Activated CD4-positive, alpha-beta T cell treated with anti-CD3 and anti-CD28 coated beads, Interleukin-2, amount 10 ng/mL, durations not matched to agents 24 days and 14 days (primary cell): ENCODE measurements at regions of chr1 and their contacts with region 1.

Region 1: GRCh38 chr1:169138866-169139670 is 32.6 kb downstream of the ATP1B1 start:
- DNase-seq: no peak
- H3K4me3 Mint-ChIP-seq: peak overlapping the region; percentile 8
- H3K27ac Mint-ChIP-seq: peak overlapping the region; percentile 81
- H3K4me1 Mint-ChIP-seq: peaks cover 15% of the 10 kb centered on the region
- H3K27me3 Mint-ChIP-seq: no peaks in the 10 kb centered on the region

Region 2: GRCh38 chr1:168683871-168684270 is 455.2 kb before region 1 on chr1:
- intact Hi-C with region 1: no loop called
- DNase-seq: no peak
- H3K4me3 Mint-ChIP-seq: no peak overlapping the region
- H3K27ac Mint-ChIP-seq: no peak overlapping the region
- H3K4me1 Mint-ChIP-seq: no peaks in the 10 kb centered on the region
- H3K27me3 Mint-ChIP-seq: peaks cover 23% of the 10 kb centered on the region

Region 3: DNA sequence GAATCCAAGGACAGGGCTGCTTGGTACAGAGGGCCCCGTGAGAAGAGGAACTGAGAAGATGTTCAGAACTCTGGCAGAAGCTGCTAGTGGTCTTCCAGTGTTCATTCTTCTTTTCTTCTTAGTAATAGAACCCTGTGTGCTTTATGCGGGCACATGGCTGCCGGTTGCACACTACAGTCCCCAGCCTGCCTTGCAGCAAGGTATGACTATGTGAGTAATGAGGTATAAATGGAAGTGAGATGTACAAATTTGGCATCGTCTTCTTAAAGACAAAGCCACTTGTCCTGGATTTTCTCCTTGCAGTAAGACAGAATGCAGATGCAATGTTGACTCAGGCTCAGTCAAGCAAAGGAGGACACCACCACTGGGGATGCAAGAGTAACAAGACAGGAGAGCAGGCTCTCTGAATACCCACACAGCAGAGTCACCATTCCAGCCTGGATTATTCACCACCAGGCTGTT is 47.6 kb before region 1 on chr1:
- intact Hi-C with region 1: loop called (anchors 1 kb)
- DNase-seq: no peak
- H3K4me3 Mint-ChIP-seq: no peak overlapping the region
- H3K27ac Mint-ChIP-seq: no peak overlapping the region
- H3K4me1 Mint-ChIP-seq: peaks cover 9% of the 10 kb centered on the region
- H3K27me3 Mint-ChIP-seq: peaks cover 7% of the 10 kb centered on the region

Region 4: DNA sequence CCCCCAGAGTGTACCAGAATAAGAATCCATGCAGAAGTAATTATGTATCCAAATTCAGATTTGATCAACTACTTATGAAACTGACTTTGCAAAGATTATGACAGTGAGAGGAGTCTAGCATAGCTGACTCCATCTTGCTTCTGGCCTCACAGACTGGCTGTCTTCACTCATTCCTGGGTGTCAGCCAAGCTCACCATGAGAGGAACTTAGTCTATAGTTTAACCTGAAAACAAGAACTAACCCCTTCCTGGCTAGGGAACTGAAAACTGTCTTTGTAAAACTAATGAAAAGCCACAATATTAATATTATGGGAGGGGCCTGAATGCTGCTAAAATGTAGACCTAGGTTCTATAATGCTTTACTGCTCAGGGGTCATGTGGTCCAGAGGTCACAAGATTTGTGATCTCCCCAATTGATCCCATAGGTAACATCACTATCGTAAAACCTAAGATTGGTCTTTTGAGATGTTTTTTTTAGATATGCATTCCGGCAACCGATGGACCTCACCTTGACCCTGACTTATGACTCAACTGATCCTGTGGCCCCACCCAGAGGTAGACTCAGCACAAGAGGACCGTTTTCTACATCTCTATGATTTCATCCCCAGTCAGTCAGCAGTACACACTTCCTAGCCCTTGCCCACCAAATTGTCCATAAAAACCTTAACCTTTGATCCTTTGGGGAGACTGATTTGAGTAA is 22.6 kb after region 1 on chr1:
- intact Hi-C with region 1: loop called (anchors 2 kb)
- DNase-seq: no peak
- H3K4me3 Mint-ChIP-seq: no peak overlapping the region
- H3K27ac Mint-ChIP-seq: no peak overlapping the region
- H3K4me1 Mint-ChIP-seq: peaks cover 7% of the 10 kb centered on the region
- H3K27me3 Mint-ChIP-seq: no peaks in the 10 kb centered on the region